ENCODE measurements at regions of chr3 and their contacts with region 1.

Region 1: DNA sequence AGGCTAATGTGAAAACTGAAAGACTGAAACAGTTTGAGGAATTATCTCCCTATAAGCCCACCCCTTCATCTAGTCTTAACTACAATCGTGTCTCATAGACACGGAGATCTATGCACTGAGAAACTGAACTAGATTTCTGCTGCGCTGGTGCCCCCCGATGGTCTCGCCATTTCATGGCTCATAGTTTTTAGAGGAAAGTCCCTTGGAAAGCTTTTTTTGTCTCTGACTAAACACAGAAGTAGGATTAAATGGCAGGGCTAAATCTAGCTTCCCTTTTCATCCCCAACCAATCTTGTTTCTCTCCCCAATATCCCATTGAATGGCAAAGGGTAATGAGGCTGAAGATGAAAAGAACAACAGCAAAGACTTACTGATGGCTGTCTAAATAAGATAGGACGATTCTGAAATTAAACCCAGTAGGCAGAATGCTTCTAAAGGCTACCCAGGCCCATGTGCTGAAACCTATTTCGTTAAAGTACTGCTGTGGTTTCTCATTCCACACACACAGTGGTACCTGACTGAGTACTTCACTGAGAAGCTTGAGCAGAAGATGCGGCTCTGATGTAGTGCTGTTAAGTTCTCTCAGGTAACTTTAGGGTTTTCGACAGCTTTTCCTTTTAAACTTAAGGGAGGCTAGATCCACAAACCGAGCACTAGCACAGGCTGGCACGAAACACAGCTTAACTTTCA is 142.7 kb downstream of the GADL1 start:
- DNase-seq: peak; percentile 20
- ATAC-seq: peak; percentile 87
- H3K4me3 ChIP-seq: no peak overlapping the region
- H3K27ac ChIP-seq: no peak overlapping the region
- H3K4me1 ChIP-seq: peaks cover 18% of the 10 kb centered on the region
- H3K27me3 ChIP-seq: peaks cover 0 to 5% of the 10 kb centered on the region in 2 experiments; a peak in 2 of 5 replicates
- CTCF ChIP-seq: peak; percentile 77
- EP300 ChIP-seq: no peak
- POLR2A ChIP-seq: no peak
- RAD21 ChIP-seq: peak; percentile 43; the same call in 1 of the 2 replicates

Region 2: DNA sequence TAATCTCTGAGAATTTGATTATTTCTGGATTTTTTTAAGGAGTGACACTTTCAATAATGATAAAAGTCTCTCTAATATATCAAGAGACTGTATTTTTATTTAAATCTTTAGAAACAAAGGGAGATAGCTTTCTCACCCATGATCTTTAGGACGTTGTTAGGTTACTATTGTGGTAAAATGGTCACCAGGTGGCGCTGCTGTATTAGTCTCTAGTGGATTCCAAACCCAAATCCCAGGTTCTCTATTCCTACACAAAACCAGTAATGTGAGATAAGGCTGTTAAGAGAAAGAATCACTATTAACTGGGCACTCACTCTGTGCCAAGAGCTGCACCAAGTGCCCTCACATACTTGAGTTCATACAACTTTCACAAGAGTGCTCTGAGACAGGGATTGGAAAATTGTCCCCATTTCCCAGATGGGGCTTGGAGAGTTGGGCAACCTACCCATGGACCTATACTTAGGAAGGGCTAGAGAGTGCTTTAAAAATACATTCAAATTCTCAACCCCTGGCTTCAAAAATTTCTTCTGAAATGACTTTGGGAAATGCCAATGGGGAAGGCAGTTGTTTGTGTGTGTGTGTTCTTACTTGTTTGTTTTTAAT is 738.7 kb before region 1 on chr3:
- CTCF ChIA-PET with region 1: interaction called, 7 read pairs
- POLR2A ChIA-PET with region 1: no interaction called
- in situ Hi-C with region 1: loop called (anchors 5 kb)
- intact Hi-C with region 1: loop called (anchors 1 kb)
- DNase-seq: peak; percentile 63
- ATAC-seq: peak; percentile 88
- H3K4me3 ChIP-seq: no peak overlapping the region
- H3K27ac ChIP-seq: no peak overlapping the region
- H3K4me1 ChIP-seq: no peaks in the 10 kb centered on the region
- H3K27me3 ChIP-seq: no peaks in the 10 kb centered on the region
- CTCF ChIP-seq: peak; percentile 77
- EP300 ChIP-seq: no peak
- POLR2A ChIP-seq: no peak
- RAD21 ChIP-seq: peak; percentile 58

Region 3: GRCh38 chr3:30112902-30113484 is 638.8 kb before region 1 on chr3:
- CTCF ChIA-PET with region 1: no interaction called
- POLR2A ChIA-PET with region 1: no interaction called
- in situ Hi-C with region 1: no loop called
- intact Hi-C with region 1: loop called (anchors 1 kb)
- DNase-seq: peak; percentile 58
- ATAC-seq: peak; percentile 58; the same call in 1 of the 3 replicates
- H3K4me3 ChIP-seq: no peak overlapping the region
- H3K27ac ChIP-seq: no peak overlapping the region
- H3K4me1 ChIP-seq: peaks cover 22% of the 10 kb centered on the region
- H3K27me3 ChIP-seq: no peaks in the 10 kb centered on the region
- CTCF ChIP-seq: peak; percentile 67
- EP300 ChIP-seq: no peak
- POLR2A ChIP-seq: no peak
- RAD21 ChIP-seq: peak; percentile 43; the same call in 1 of the 2 replicates

Region 4: GRCh38 chr3:30199096-30199759 is 552.5 kb before region 1 on chr3:
- CTCF ChIA-PET with region 1: no interaction called
- POLR2A ChIA-PET with region 1: no interaction called
- in situ Hi-C with region 1: loop called (anchors 10 kb)
- intact Hi-C with region 1: loop called (anchors 2 kb)
- DNase-seq: peak; percentile 49
- ATAC-seq: peak; percentile 61
- H3K4me3 ChIP-seq: no peak overlapping the region
- H3K27ac ChIP-seq: no peak overlapping the region
- H3K4me1 ChIP-seq: peaks cover 21% of the 10 kb centered on the region
- H3K27me3 ChIP-seq: no peaks in the 10 kb centered on the region; a peak in 1 of 5 replicates
- CTCF ChIP-seq: peak; percentile 72
- EP300 ChIP-seq: no peak
- POLR2A ChIP-seq: no peak
- RAD21 ChIP-seq: peak; percentile 62

Region 5: GRCh38 chr3:30553641-30554316 is 198.0 kb before region 1 on chr3:
- CTCF ChIA-PET with region 1: no interaction called
- POLR2A ChIA-PET with region 1: no interaction called
- in situ Hi-C with region 1: no loop called
- intact Hi-C with region 1: no loop called
- DNase-seq: no peak
- ATAC-seq: no peak
- H3K4me3 ChIP-seq: no peak overlapping the region
- H3K27ac ChIP-seq: no peak overlapping the region
- H3K4me1 ChIP-seq: peaks cover 39% of the 10 kb centered on the region
- H3K27me3 ChIP-seq: no peaks in the 10 kb centered on the region
- CTCF ChIP-seq: no peak
- EP300 ChIP-seq: no peak
- POLR2A ChIP-seq: no peak
- RAD21 ChIP-seq: no peak

Region 6: DNA sequence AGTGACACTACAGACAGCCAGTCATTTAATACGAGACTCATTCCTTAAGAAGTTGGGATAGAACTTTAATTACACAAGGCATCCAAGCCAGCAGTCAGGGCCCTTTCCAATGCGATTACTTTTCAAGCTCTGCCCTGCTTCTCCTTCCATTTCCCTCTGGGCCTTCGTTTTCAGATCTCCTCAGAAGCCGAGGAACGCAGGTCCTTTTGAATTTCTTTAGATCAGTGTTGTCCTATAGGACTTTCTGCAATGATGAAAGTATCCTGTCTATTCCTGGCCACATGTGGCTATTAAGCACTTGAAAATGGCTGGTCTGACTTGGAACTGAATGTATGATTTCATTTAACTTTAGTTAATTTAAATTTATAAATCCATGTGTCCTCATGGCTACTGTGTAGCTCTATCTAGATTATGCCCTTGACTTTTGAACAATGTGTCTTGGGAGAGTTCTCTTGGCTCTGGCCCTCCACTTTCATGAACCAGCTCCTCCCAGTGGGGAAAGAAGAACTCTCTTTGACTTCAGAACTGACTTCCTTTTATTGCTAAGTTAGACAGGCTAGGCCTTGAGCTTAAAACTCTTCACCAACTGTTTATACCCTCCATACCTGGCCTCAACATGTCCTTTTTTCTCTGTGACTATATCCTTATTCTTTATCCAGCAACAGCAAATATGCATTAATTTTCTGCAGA is 122.7 kb before region 1 on chr3:
- CTCF ChIA-PET with region 1: no interaction called
- POLR2A ChIA-PET with region 1: no interaction called
- in situ Hi-C with region 1: no loop called
- intact Hi-C with region 1: no loop called
- DNase-seq: no peak
- ATAC-seq: no peak
- H3K4me3 ChIP-seq: no peak overlapping the region; a peak in 1 of 6 replicates
- H3K27ac ChIP-seq: peak overlapping the region; percentile 69
- H3K4me1 ChIP-seq: peaks cover 100% of the 10 kb centered on the region
- H3K27me3 ChIP-seq: no peaks in the 10 kb centered on the region
- CTCF ChIP-seq: 0 out of 2 replicates have a peak, but pooled peaks have one; percentile 20
- EP300 ChIP-seq: no peak
- POLR2A ChIP-seq: no peak
- RAD21 ChIP-seq: no peak

Region 7: DNA sequence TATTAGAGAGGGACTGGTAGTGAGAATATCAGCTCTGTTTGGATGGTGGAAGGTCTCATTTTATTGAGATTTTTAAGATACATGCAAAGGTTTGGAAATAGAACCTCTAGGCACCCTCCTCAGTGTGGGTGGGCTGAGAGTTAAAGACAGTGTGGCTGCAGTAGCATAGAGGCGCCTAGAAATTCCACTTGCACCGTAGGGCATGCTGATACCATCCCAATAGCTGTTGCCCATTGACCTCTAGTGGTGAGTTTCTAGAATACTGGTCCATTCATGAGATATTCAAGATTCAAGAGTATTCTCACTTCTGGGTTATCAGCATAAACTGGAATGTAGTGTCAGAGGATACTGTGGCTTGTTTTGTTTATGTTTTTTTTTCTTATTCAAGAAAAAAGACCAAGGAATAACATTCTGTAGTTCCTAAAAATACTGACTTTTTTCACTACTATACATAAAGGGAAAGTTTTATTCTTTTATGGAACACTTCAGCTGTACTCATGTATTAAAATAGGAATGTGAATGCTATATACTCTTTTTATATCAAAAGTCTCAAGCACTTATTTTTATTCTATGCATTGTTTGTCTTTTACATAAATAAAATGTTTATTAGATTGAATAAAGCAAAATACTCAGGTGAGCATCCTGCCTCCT is 58.2 kb before region 1 on chr3:
- CTCF ChIA-PET with region 1: no interaction called
- POLR2A ChIA-PET with region 1: no interaction called
- in situ Hi-C with region 1: no loop called
- intact Hi-C with region 1: loop called (anchors 2 kb)
- DNase-seq: peak; percentile 62
- ATAC-seq: peak; percentile 69
- H3K4me3 ChIP-seq: no peak overlapping the region
- H3K27ac ChIP-seq: peak overlapping the region; percentile 15
- H3K4me1 ChIP-seq: peaks cover 48% of the 10 kb centered on the region
- H3K27me3 ChIP-seq: no peaks in the 10 kb centered on the region
- CTCF ChIP-seq: peak; percentile 73
- EP300 ChIP-seq: no peak
- POLR2A ChIP-seq: no peak; a peak in 1 of 4 replicates
- RAD21 ChIP-seq: peak; percentile 73

Region 8: DNA sequence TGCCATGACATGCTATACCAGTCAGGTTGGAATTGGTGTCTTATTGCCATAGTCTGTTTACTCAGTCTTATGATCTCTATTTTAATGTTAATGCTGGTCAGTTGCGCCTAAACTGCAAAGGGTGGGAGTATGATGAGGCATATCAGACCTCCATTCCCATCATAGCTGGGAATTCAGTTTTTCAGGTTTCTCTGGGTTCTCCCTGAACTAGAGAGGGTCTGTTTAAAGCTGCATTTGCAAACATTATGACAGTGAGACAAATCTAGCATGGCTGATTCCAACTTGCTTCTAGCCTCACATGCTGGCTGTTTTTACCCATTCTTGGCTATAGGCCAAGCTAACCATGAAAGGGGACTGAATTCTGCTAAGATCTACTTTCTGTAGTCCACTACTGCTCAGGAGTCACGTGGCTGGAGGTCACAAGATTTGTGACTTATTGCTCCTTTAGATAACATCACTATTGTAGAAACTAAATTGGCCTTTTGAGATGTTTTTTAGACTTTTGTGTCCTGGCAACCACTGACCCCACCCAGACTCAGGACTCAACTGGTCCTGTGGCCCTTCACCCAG is 48.8 kb before region 1 on chr3:
- CTCF ChIA-PET with region 1: no interaction called
- POLR2A ChIA-PET with region 1: no interaction called
- in situ Hi-C with region 1: no loop called
- intact Hi-C with region 1: loop called (anchors 2 kb)
- DNase-seq: no peak
- ATAC-seq: peak; percentile 14
- H3K4me3 ChIP-seq: no peak overlapping the region
- H3K27ac ChIP-seq: no peak overlapping the region
- H3K4me1 ChIP-seq: no peaks in the 10 kb centered on the region
- H3K27me3 ChIP-seq: no peaks in the 10 kb centered on the region
- CTCF ChIP-seq: no peak
- EP300 ChIP-seq: no peak
- POLR2A ChIP-seq: 0 out of 4 replicates have a peak, but pooled peaks of 1 of the 2 experiments have one; percentile 16
- RAD21 ChIP-seq: no peak

Measured in HepG2 (cell line).